Cardiac septum (tissue), 1 donor: ENCODE measurements at regions of chr12 and their contacts with region 1.

Region 1: DNA sequence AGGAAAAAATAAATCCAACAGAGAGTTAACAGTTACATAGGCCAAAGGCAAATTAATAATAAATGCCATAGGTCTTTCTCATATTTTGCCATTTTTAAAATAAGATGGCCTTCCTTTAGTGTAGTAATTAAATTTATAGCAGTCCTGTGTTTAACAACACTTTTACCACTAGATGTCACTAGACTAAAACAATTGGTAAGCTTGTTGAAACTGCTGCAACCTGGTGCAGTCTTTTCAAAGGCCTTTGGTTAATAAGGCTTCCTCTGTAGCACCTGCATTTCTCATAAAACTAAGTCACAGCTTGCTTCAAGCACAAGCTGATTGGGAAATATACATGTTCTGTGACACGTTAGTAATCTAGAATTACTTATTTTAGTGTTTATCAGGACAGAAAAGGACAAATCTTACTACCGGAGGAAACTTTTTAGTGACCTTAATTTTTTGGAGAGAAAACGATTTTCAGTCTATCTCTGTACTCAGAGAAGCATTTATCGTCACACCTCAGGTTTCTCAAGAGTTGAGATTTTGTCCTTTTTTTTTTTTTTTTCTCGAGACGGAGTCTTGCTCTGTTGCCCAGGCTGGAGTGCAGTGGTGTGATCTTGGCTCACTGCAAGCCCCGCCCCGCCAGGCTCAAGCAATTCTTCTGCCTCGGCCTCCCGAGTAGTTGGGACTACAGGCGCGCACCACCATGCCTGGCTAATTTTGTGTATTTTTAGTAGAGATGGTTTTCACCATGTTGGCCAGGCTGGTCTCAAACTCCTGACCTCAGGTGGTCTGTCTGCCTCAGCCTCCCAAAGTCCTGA is 20.0 kb downstream of the BORCS5 start:
- DNase-seq: no peak

Region 2: DNA sequence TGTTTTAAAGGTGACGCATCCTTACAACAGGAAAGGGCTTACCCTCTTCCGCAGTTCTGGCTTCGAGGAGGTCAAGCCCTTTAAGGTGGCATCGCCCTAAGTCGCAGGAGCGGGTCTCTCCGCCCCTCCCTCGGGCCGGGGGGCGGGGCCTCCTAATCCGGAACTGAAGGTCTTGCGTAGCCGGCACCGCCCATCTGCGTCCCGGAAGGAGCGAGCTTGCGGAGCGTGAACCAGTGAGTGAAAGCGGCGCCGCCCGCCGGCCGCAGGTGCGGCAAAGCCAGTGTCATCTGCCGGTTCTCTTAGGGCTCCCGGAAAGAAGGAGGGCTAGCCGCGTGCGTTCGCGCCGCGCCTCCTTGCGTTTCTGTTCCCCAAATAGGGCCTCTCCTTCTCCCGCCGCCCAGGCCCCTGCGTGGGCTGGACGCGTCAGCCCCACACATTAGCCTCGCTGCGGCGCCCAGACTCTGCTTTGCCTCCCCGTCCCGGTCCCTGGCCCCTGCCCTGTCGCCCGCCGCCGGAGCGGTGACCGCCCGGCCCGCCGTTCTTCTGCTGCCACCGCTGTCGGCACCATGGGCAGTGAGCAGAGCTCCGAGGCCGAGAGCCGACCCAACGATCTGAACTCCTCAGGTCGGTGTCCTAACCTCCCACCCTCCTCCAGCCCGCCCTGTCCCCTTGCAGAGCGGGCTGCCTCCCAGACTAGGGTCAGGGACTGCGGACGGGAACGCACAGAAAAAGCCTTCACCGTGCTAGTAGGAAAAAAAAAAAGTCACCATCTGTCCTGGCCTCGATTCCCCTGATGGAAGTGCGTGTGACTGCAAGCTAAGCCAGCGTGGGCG is 19.7 kb before region 1 on chr12 and contains the start of gene BORCS5:
- intact Hi-C with region 1: no loop called
- DNase-seq: peak; percentile 99
- total RNA-seq, gene BORCS5: 9.7 TPM

Region 3: DNA sequence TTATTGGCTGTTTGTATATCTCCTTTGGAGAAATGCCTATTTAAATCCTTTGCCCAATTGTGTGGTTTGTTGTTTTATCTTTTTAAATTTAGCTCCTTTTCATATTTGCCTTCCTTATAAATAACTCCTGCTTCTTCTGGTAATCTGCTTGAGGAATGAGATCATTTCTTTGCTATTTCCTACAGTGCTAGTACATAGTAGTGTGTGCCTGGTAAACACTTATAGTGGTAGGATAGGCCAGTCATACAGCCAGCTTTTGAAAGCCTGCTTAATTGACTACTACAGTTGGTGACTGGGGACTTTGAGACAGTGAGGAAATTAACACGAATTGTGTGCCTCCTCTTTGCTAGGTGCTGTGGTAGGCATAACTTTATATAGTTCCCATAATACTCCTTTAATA is 48.8 kb after region 1 on chr12:
- intact Hi-C with region 1: no loop called
- DNase-seq: no peak

Region 4: DNA sequence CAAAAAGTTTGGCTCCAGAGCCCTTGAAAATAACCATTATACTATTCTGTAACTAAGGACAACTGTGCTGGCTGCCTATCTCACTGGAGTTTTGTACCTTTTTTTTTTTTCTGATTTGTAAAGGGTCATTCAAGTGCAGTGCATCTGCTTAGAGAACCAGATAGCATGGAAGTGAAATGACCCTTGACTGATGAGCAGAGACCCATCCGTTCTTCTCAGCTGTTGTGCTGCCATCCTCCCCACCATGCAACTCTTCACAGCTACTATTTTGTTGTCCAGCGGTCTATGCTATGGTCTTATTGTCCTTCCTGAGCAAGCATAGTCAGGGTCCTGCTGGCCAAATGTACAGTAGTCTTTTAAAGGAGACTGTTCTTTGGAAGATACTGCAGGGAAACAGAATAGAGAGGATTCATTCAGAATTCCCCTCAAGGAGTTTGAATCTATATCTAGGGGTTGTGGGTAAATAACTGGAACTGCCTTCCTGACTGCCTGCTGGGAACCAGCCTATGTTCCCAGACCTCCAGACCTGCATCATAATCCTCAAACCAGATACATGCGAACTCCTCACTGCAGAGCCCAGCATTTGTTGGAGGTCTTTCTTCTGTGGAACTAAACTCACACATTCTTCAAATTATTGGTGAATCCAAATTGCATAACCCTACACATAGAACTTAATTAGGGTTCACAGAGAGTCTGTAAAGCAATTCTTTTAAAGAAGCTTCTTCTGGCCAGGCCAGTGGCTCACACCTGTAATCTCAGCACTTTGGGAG is 278.0 kb after region 1 on chr12:
- intact Hi-C with region 1: loop called (anchors 5 kb)
- DNase-seq: no peak

Region 5: GRCh38 chr12:12705838-12706520 is 329.1 kb after region 1 on chr12:
- intact Hi-C with region 1: loop called (anchors 2 kb)
- DNase-seq: no peak